Panc1 (cell line): ENCODE measurements at regions of chr6 and their contacts with region 1.

Region 1: DNA sequence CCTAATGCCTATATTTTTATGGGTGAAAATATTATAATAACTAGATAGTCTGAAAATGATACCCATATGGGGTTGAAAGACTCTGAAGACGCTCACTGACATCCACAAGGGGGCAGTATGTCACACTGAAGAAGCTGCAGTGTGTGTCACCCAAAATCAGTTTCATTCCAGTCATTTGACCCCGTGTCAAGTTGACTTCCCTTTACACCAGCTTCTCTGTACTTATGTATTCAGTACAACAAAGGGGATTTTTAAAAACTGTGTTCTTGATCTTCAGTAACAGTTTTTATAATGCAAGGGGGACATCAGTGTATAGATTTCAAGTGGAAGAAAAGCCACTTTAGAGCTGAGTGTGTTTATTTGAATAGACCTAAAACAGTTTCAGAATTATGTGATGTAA is 19.3 kb downstream of the FAXC start:
- DNase-seq: peak; percentile 22
- ATAC-seq: peak; percentile 85
- H3K4me3 ChIP-seq: no peak overlapping the region
- H3K27ac ChIP-seq: no peak overlapping the region
- H3K4me1 ChIP-seq: no peaks in the 10 kb centered on the region
- H3K27me3 ChIP-seq: no peaks in the 10 kb centered on the region
- CTCF ChIP-seq: peak; percentile 88

Region 2: GRCh38 chr6:99378636-99379035 is 48.5 kb after region 1 on chr6:
- CTCF ChIA-PET with region 1: no interaction called
- POLR2A ChIA-PET with region 1: no interaction called
- in situ Hi-C with region 1: no loop called
- intact Hi-C with region 1: no loop called
- DNase-seq: no peak
- ATAC-seq: no peak
- H3K4me3 ChIP-seq: no peak overlapping the region
- H3K27ac ChIP-seq: no peak overlapping the region
- H3K4me1 ChIP-seq: no peaks in the 10 kb centered on the region
- H3K27me3 ChIP-seq: no peaks in the 10 kb centered on the region
- CTCF ChIP-seq: no peak

Region 3: DNA sequence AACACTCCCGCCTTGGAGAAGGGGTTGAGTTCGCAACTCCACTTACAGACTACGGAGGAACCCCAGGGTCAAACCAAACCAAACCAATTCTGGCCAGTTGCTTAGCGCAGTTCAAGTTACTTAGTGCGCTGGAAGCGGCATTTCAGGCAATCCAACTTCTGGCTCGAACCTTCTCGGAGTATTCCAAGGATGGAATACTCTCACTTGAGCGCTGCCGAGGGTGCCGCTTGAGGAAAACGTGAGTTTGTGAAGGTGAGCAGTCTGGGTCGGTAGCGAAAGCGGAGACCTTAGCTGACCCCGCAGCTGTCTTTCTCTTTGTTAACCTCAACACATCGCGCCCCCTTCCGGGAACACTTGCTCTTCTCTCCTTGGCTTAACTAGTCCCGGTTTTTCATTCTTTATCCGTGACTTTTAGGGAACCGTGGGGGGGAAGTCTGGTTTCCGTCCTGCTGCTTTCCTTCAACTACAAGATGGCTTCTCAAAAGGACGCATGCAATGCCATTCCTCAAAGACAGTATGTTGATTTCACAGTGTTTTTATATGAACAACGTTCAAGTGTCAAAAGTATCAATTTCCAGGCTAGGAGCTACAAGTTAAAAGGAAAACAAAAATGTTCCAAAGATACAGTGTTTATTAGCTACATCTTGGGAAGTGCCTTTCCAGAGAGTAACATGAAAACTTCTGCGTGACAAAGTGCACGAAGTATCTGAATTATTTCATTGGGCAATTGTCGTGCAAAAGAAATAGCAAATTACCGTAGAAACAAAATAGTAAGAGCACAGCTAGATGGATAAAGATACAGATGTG is 95.7 kb after region 1 on chr6:
- CTCF ChIA-PET with region 1: no interaction called
- POLR2A ChIA-PET with region 1: no interaction called
- in situ Hi-C with region 1: no loop called
- intact Hi-C with region 1: loop called (anchors 10 kb)
- DNase-seq: peak; percentile 93
- ATAC-seq: peak; percentile 87
- H3K4me3 ChIP-seq: peak overlapping the region; percentile 95 to 99
- H3K27ac ChIP-seq: peak overlapping the region; percentile 99
- H3K4me1 ChIP-seq: peaks cover 25% of the 10 kb centered on the region
- H3K27me3 ChIP-seq: no peaks in the 10 kb centered on the region
- CTCF ChIP-seq: peak; percentile 78